Activated T-helper 1 cell treated with anti-CD3 and anti-CD28 coated beads, Interleukin-12 subunit alpha, Interleukin-12 subunit beta, Interleukin-2, Interleukin-4 antibody, amounts not matched to agents 30 ng/mL and 10 ng/mL and 1 ng/mL, durations not matched to agents 14 hours and 24 hours and 36 hours (primary cell): ENCODE measurements at regions of chr13 and their contacts with region 1.

Region 1: GRCh38 chr13:99087096-99087953 is 109.5 kb upstream of the DOCK9 start:
- DNase-seq: peak; percentile 93
- H3K4me3 Mint-ChIP-seq: peak overlapping the region; percentile 97
- H3K27ac Mint-ChIP-seq: peak overlapping the region; percentile 98
- H3K4me1 Mint-ChIP-seq: peaks cover 39% of the 10 kb centered on the region
- H3K27me3 Mint-ChIP-seq: peaks cover 2% of the 10 kb centered on the region

Region 2: DNA sequence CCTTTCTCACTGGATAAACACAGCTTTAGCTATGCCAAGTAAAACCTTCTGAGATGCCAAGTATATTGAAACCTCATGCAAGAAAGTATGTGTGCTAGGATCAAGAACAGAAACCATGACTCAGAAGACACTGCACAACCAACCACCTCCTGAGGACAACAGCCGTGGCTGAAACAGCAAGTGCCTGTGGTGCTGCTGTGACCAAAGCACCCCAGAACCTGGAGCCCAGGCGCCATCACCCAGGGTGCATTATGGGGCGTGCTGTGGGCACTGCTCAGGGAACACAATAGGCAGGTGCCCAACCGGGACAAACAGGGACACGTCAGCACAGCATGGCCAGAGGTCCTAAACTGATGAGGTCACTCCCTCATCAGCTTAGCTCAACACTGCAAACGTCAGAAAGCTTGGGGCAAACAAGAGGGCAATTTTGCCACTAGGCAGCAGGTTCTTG is 233.5 kb before region 1 on chr13:
- intact Hi-C with region 1: loop called (anchors 1 kb)
- DNase-seq: peak; percentile 59
- H3K4me3 Mint-ChIP-seq: peak overlapping the region; percentile 36
- H3K27ac Mint-ChIP-seq: peak overlapping the region; percentile 13
- H3K4me1 Mint-ChIP-seq: peaks cover 21% of the 10 kb centered on the region
- H3K27me3 Mint-ChIP-seq: no peaks in the 10 kb centered on the region

Region 3: DNA sequence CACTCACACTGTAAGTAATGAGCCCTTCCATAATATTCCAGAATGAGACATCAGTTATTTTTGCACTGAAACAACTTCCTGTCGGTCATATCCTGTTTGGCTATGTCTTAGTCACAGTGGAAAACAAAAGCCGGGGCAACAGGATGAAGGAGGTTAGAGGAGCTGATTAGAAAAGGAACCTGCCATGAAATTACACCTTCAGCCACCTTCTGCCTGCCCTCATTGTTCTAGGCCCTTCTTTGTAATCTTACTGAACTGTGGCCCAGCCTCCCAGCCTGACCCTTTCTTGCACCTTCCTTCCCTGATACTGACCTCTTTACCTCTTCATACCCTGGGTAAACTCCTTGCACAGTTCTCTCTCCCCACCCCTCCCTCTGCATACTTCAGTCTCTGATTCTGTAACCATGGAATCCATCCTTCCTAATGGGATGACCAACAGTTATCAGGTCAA is 176.8 kb before region 1 on chr13:
- intact Hi-C with region 1: loop called (anchors 5 kb)
- DNase-seq: peak; percentile 49
- H3K4me3 Mint-ChIP-seq: peak overlapping the region; percentile 35
- H3K27ac Mint-ChIP-seq: peak overlapping the region; percentile 97
- H3K4me1 Mint-ChIP-seq: peaks cover 56% of the 10 kb centered on the region
- H3K27me3 Mint-ChIP-seq: no peaks in the 10 kb centered on the region

Region 4: GRCh38 chr13:99053636-99054233 is 33.6 kb before region 1 on chr13:
- intact Hi-C with region 1: loop called (anchors 1 kb)
- DNase-seq: no peak
- H3K4me3 Mint-ChIP-seq: peak overlapping the region; percentile 48
- H3K27ac Mint-ChIP-seq: peak overlapping the region; percentile 28
- H3K4me1 Mint-ChIP-seq: peaks cover 67% of the 10 kb centered on the region
- H3K27me3 Mint-ChIP-seq: no peaks in the 10 kb centered on the region

Region 5: DNA sequence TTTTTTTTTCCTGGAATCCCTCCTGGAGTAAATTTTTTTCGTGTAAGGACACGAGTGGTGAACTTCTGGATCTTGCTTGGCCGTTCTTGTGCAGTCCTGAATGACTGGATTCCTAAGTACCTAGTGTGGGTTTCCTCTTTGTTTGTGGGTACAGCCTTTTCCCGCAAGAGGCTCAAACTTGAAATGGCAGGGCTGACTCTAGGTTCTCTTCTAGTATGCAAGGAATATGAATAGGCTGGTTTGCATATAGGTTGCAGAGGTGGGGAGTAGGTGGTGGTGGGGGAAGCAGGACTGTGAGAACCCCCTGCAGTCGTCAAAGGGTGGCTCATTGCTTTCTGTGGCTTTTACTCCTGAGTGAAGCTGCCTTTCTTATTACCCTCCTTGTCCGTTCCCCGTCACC is 126.9 kb after region 1 on chr13:
- intact Hi-C with region 1: loop called (anchors 5 kb)
- DNase-seq: no peak
- H3K4me3 Mint-ChIP-seq: peak overlapping the region; percentile 72
- H3K27ac Mint-ChIP-seq: peak overlapping the region; percentile 90
- H3K4me1 Mint-ChIP-seq: peaks cover 66% of the 10 kb centered on the region
- H3K27me3 Mint-ChIP-seq: peaks cover 3% of the 10 kb centered on the region

Region 6: GRCh38 chr13:99436686-99437416 is 349.5 kb after region 1 on chr13:
- intact Hi-C with region 1: loop called (anchors 2 kb)
- DNase-seq: peak; percentile 88
- H3K4me3 Mint-ChIP-seq: peak overlapping the region; percentile 40
- H3K27ac Mint-ChIP-seq: peak overlapping the region; percentile 65
- H3K4me1 Mint-ChIP-seq: peaks cover 60% of the 10 kb centered on the region
- H3K27me3 Mint-ChIP-seq: peaks cover 29% of the 10 kb centered on the region